ENCODE measurements at regions of chr11 and their contacts with region 1.

Region 1: DNA sequence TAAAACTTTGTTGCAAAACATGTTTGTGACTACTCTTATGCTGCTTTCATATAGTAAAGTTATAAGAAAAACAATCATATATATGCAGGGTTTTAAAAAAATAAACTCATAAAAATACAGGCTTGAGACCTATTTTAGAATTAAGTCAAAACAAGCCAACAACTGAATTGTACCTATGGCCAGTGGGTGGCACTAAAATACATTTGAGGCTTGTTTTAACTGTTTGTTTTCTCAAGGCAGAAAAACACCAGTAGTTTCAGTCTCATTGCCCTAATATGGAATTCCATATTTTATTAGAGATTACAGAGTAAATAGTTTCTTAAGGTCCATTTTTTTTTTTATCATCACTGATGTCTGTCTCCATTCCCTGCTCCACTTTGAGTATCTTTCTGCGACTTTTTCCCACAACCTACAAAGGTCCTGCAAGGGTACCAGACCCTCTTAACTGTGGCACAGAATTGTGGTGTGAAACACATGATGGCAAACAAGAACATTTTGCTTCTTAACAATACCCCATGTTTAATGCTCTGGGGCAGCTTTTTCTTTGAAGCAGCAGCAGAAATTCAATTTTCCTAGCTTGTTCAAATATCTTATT is 8.5 kb upstream of the CCDC89 start:
- DNase-seq: peak; percentile 16
- H3K4me3 Mint-ChIP-seq: no peak overlapping the region
- H3K27ac Mint-ChIP-seq: no peak overlapping the region
- H3K4me1 Mint-ChIP-seq: peaks cover 22% of the 10 kb centered on the region
- H3K27me3 Mint-ChIP-seq: no peaks in the 10 kb centered on the region

Region 2: GRCh38 chr11:85682330-85683305 is 11.9 kb before region 1 on chr11:
- CTCF ChIA-PET with region 1: interaction called, 21 read pairs
- intact Hi-C with region 1: loop called (anchors 2 kb)
- DNase-seq: peak; percentile 72
- H3K4me3 Mint-ChIP-seq: peak overlapping the region; percentile 73
- H3K27ac Mint-ChIP-seq: peak overlapping the region; percentile 57
- H3K4me1 Mint-ChIP-seq: peaks cover 12% of the 10 kb centered on the region
- H3K27me3 Mint-ChIP-seq: no peaks in the 10 kb centered on the region

Region 3: DNA sequence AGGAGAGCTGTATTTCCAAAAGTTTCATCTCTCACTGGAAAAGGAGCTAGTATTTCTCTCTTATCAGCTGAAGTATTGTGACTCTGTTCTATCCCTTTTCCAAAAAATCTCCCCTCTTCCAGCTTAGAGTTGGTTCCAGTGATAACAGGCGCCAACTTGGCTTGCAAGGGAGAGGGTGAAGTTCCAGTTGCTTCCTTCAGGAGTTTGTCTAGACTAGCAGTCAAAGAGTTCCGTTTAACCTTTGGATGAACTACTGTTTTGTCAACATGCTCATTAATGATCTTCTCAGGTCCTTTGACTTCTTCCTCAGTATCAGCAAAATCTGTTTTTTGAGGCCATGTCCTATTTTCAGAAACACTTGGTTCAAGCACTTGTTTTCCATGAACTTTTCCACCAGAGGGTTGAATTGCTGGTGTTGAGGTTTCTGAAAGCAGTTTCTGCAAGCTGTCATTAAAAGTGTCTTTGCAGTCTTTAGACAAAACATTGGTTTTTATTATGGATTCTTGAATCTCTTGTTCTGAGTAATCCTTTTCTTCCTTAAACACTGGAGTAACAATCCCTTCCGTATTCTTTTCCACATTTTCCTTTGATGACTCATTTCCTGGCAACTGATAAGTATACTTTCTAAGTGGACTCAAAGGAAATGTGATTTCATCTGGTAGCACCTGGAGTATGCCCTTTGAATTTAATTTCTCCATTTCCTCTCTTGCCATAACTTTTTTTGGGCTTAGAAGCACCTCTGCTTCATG is 31.2 kb after region 1 on chr11:
- CTCF ChIA-PET with region 1: no interaction called
- intact Hi-C with region 1: no loop called
- DNase-seq: no peak
- H3K4me3 Mint-ChIP-seq: no peak overlapping the region
- H3K27ac Mint-ChIP-seq: no peak overlapping the region
- H3K4me1 Mint-ChIP-seq: no peaks in the 10 kb centered on the region
- H3K27me3 Mint-ChIP-seq: no peaks in the 10 kb centered on the region

Region 4: GRCh38 chr11:85810871-85811611 is 116.6 kb after region 1 on chr11 and contains the start of gene SYTL2:
- CTCF ChIA-PET with region 1: interaction called, 4 read pairs
- intact Hi-C with region 1: loop called (anchors 2 kb)
- DNase-seq: peak; percentile 77
- H3K4me3 Mint-ChIP-seq: peak within 1 kb of the TSS; percentile 81
- H3K27ac Mint-ChIP-seq: no peak within 1 kb of the TSS
- H3K4me1 Mint-ChIP-seq: peaks cover 33% of the 10 kb centered on the region
- H3K27me3 Mint-ChIP-seq: no peaks in the 10 kb centered on the region
- total RNA-seq, gene SYTL2: 13.8 to 13.9 TPM

Region 5: GRCh38 chr11:86726118-86726748 is 1031.8 kb after region 1 on chr11:
- CTCF ChIA-PET with region 1: no interaction called
- intact Hi-C with region 1: no loop called
- DNase-seq: no peak
- H3K4me3 Mint-ChIP-seq: no peak overlapping the region
- H3K27ac Mint-ChIP-seq: no peak overlapping the region
- H3K4me1 Mint-ChIP-seq: no peaks in the 10 kb centered on the region
- H3K27me3 Mint-ChIP-seq: peaks cover 5% of the 10 kb centered on the region

Measured in activated naive CD4-positive, alpha-beta T cell treated with anti-CD3 and anti-CD28 coated beads for 36 hours (primary cell).